MCF 10A (cell line): ENCODE measurements at regions of chr17 and their contacts with region 1.

Region 1: GRCh38 chr17:2844416-2844815 is 48.2 kb downstream of the RAP1GAP2 start:
- DNase-seq: peak; percentile 9
- H3K4me3 Mint-ChIP-seq: no peak overlapping the region
- H3K27ac Mint-ChIP-seq: no peak overlapping the region
- H3K4me1 Mint-ChIP-seq: peaks cover 6% of the 10 kb centered on the region
- H3K27me3 Mint-ChIP-seq: no peaks in the 10 kb centered on the region
- CTCF ChIP-seq: no peak

Region 2: DNA sequence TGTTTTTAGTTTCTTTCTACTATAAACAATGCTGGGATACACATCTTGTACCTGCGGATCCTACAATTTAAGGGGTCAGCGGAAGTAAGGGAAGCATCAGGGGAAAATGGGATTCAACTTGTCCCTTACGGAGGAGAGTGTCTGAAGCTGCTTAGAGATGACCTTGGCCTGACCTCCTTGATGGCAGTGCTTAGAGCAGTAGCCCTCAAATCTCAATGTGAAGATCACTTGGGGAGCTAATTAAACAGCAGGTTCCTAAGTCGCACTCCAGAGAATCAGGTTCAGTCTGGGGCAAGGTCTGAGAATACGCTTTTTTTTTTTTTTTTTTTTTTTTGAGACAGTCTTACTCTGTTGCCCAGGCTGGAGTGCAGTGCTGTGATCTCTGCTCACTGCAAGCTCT is 323.2 kb before region 1 on chr17:
- CTCF ChIA-PET with region 1: no interaction called
- POLR2A ChIA-PET with region 1: no interaction called
- intact Hi-C with region 1: no loop called
- DNase-seq: no peak
- H3K4me3 Mint-ChIP-seq: no peak overlapping the region
- H3K27ac Mint-ChIP-seq: no peak overlapping the region
- H3K4me1 Mint-ChIP-seq: no peaks in the 10 kb centered on the region
- H3K27me3 Mint-ChIP-seq: no peaks in the 10 kb centered on the region
- CTCF ChIP-seq: no peak

Region 3: GRCh38 chr17:2871205-2871604 is 26.8 kb after region 1 on chr17:
- CTCF ChIA-PET with region 1: interaction called, 15 read pairs
- POLR2A ChIA-PET with region 1: no interaction called
- intact Hi-C with region 1: no loop called
- DNase-seq: no peak
- H3K4me3 Mint-ChIP-seq: no peak overlapping the region
- H3K27ac Mint-ChIP-seq: no peak overlapping the region
- H3K4me1 Mint-ChIP-seq: no peaks in the 10 kb centered on the region
- H3K27me3 Mint-ChIP-seq: no peaks in the 10 kb centered on the region
- CTCF ChIP-seq: no peak

Region 4: GRCh38 chr17:2929881-2930533 is 85.6 kb after region 1 on chr17:
- CTCF ChIA-PET with region 1: interaction called, 101 read pairs
- POLR2A ChIA-PET with region 1: interaction called, 9 read pairs
- intact Hi-C with region 1: loop called (anchors 1 kb)
- DNase-seq: peak; percentile 60
- H3K4me3 Mint-ChIP-seq: no peak overlapping the region
- H3K27ac Mint-ChIP-seq: peak overlapping the region; percentile 28
- H3K4me1 Mint-ChIP-seq: peaks cover 14% of the 10 kb centered on the region
- H3K27me3 Mint-ChIP-seq: no peaks in the 10 kb centered on the region
- CTCF ChIP-seq: peak; percentile 83

Region 5: DNA sequence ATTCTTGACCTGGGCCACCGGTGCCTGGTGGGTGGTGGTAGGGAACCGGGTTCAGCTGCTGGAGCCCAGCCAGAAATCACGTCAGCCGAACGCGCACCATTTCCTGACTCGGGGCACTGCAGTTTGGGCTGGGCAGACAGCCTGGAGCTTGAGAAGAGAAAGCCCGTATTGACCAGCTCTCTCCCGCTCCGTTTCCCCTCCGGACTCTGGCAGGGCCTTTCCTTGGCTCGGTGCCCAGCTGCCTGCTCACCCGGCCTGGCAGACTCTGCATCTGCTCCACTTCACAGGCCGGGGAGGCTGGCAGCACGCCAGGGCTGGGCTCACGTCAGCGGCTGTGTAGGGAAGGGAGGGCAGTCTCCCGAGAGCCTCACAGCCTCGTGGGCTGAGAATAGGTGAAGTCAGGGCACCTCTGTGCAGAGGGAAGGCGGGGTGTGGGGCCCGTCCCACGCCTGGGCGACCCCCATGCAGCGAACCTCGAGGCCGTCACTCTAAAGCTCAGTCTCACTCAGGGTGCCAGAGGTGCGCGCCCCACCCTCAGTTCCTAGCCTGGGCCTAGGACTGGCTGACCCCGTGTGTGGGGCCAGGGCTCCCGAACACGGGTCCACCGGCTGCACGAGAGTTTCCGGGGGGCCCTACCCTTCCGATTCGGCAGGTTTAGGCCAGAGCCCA is 159.9 kb after region 1 on chr17:
- CTCF ChIA-PET with region 1: interaction called, 19 read pairs
- POLR2A ChIA-PET with region 1: interaction called, 5 read pairs
- intact Hi-C with region 1: loop called (anchors 2 kb)
- DNase-seq: peak; percentile 97
- H3K4me3 Mint-ChIP-seq: peak overlapping the region; percentile 50
- H3K27ac Mint-ChIP-seq: peak overlapping the region; percentile 54
- H3K4me1 Mint-ChIP-seq: peaks cover 9% of the 10 kb centered on the region
- H3K27me3 Mint-ChIP-seq: no peaks in the 10 kb centered on the region
- CTCF ChIP-seq: no peak

Region 6: DNA sequence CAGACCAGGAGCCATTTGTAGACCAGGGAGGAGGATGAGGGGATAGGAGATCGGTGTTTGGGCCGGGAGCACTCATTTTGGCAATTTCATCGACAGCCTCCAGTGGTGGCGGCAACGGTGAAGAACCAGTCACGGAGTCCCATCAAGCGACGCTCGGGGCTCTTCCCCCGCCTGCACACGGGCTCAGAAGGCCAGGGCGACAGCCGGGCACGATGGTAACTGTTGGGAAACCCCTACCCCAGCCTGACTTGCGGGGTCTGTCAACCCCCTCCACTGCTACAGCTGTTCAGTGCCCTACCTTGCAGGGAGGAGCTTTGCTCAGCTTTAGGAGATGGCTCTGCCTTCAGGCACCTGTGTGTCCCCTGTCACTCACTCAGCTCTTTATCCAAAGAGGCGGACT is 176.0 kb after region 1 on chr17:
- CTCF ChIA-PET with region 1: interaction called, 118 read pairs
- POLR2A ChIA-PET with region 1: no interaction called
- intact Hi-C with region 1: no loop called
- DNase-seq: no peak
- H3K4me3 Mint-ChIP-seq: no peak overlapping the region
- H3K27ac Mint-ChIP-seq: no peak overlapping the region
- H3K4me1 Mint-ChIP-seq: no peaks in the 10 kb centered on the region
- H3K27me3 Mint-ChIP-seq: no peaks in the 10 kb centered on the region
- CTCF ChIP-seq: no peak